Cardiac septum (tissue), 1 donor: ENCODE measurements at regions of chr11 and their contacts with region 1.

Region 1: DNA sequence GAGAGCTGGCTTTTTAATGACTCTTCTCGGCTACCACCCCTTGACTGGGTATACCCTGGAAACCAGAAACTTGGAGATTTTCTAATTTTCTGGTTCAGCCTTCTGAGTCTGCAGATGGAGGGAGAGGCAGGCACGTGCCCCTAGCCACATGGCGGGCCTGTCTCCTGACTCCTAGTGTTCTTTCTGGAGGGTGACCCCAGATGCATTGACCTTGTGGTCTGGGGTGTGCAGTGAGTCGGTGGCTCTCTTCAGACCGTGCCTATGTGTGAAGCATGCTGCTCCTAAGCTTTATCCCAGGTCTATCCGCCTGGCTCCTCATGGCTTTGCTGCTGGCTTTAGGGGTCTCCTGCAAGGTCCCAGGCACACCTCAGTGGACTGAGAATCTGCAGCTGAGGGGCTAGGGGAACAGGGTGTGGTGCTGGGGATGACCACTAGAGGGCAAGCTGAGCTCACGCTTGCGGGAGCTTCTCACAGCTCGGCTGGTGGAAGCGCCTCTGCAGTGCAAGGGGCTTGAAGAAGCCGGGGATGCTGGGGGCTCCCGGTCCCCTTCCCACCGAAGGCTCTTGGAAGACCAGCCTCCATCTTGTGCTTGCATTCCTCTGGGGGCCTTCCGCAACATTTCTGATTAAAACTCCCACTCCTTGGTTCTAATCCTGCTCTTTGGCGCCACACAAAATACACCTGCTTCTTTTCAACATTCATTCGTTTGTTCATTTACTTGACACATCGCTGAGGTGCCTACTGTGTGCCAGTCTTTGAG is 51.8 kb downstream of the OTOG start:
- DNase-seq: peak; percentile 77

Region 2: GRCh38 chr11:17722000-17722643 is 123.2 kb after region 1 on chr11:
- intact Hi-C with region 1: loop called (anchors 2 kb)
- DNase-seq: peak; percentile 62

Region 3: DNA sequence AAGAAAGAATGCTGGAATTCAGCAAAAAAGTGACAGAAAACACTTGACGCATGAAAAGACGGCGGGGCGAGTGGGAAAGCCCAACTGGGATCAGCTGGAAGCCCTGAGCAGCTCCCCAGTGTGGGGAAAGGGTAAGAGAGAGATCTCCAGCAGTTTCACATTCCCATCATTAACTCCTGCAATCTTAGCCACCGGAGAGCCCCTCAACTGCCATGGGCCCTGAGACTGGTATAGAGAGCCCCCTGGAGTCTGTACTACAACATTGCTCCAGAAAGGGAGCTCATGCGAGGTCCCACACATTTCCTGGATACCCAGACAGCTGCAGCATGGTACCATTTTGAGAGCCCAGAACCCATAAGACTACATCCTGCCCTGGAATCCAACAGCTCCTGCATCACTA is 604.8 kb after region 1 on chr11:
- intact Hi-C with region 1: no loop called
- DNase-seq: no peak